Activated T-helper 1 cell treated with anti-CD3 and anti-CD28 coated beads, Interleukin-12 subunit alpha, Interleukin-12 subunit beta, Interleukin-2, Interleukin-4 antibody, amounts not matched to agents 30 ng/mL and 10 ng/mL and 1 ng/mL, durations not matched to agents 14 hours and 24 hours and 36 hours (primary cell): ENCODE measurements at regions of chr2 and their contacts with region 1.

Region 1: GRCh38 chr2:144325086-144325485 is 194.8 kb downstream of the ZEB2 start:
- DNase-seq: peak; percentile 55
- H3K4me3 Mint-ChIP-seq: peak overlapping the region; percentile 72
- H3K27ac Mint-ChIP-seq: peak overlapping the region; percentile 97
- H3K4me1 Mint-ChIP-seq: peaks cover 81% of the 10 kb centered on the region
- H3K27me3 Mint-ChIP-seq: no peaks in the 10 kb centered on the region

Region 2: GRCh38 chr2:143901185-143901842 is 423.8 kb before region 1 on chr2:
- intact Hi-C with region 1: loop called (anchors 2 kb)
- DNase-seq: no peak
- H3K4me3 Mint-ChIP-seq: no peak overlapping the region
- H3K27ac Mint-ChIP-seq: no peak overlapping the region
- H3K4me1 Mint-ChIP-seq: peaks cover 20% of the 10 kb centered on the region
- H3K27me3 Mint-ChIP-seq: peaks cover 23% of the 10 kb centered on the region

Region 3: GRCh38 chr2:144256996-144257707 is 67.9 kb before region 1 on chr2:
- intact Hi-C with region 1: loop called (anchors 2 kb)
- DNase-seq: no peak
- H3K4me3 Mint-ChIP-seq: no peak overlapping the region
- H3K27ac Mint-ChIP-seq: peak overlapping the region; percentile 71
- H3K4me1 Mint-ChIP-seq: peaks cover 41% of the 10 kb centered on the region
- H3K27me3 Mint-ChIP-seq: no peaks in the 10 kb centered on the region

Region 4: DNA sequence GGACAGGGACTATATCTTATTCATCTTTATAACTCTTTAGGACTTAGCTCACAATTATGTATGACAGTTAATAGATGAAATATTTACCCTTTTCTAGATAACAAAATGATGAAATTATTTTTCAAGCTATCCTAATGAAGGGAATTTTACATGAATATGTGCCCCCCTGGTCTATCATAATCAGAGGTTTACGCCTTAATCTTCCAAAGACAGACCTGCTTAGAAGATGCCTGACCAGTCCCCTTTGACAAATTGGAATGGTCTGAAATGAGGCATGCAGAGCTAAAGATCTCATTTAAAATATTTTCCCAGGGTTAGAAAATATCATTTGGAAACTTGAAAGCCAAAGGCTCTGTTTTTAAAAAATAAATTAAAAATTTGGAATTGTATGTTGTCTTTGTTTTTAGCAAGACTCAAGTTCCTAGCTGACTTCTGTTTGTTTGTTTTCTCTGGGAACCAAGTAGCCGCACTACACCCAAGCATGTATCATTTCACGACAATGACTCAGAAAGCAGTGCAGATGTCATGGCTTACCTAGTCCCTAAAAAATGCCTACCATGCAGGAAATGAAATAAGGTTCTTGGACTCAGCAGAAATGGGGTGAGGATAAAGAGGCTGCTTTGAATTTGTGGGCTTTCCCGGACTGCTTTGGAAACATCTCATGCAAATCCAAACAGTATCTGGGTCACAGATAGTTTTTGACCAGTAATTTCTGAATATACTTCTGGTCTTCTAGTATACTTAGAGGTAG is 32.7 kb after region 1 on chr2:
- intact Hi-C with region 1: loop called (anchors 1 kb)
- DNase-seq: peak; percentile 13
- H3K4me3 Mint-ChIP-seq: no peak overlapping the region
- H3K27ac Mint-ChIP-seq: peak overlapping the region; percentile 71
- H3K4me1 Mint-ChIP-seq: peaks cover 30% of the 10 kb centered on the region
- H3K27me3 Mint-ChIP-seq: no peaks in the 10 kb centered on the region

Region 5: GRCh38 chr2:144456680-144457079 is 131.6 kb after region 1 on chr2:
- intact Hi-C with region 1: loop called (anchors 1 kb)
- DNase-seq: no peak
- H3K4me3 Mint-ChIP-seq: no peak overlapping the region
- H3K27ac Mint-ChIP-seq: no peak overlapping the region
- H3K4me1 Mint-ChIP-seq: peaks cover 78% of the 10 kb centered on the region
- H3K27me3 Mint-ChIP-seq: peaks cover 13% of the 10 kb centered on the region

Region 6: GRCh38 chr2:144471305-144472045 is 146.4 kb after region 1 on chr2:
- intact Hi-C with region 1: loop called (anchors 1 kb)
- DNase-seq: no peak
- H3K4me3 Mint-ChIP-seq: no peak overlapping the region
- H3K27ac Mint-ChIP-seq: peak overlapping the region; percentile 15
- H3K4me1 Mint-ChIP-seq: peaks cover 20% of the 10 kb centered on the region
- H3K27me3 Mint-ChIP-seq: no peaks in the 10 kb centered on the region